ENCODE measurements at regions of chr2 and their contacts with region 1.

Region 1: GRCh38 chr2:163132850-163133249 is 294.3 kb upstream of the KCNH7 start:
- H3K4me3 Mint-ChIP-seq: no peak overlapping the region
- H3K27ac Mint-ChIP-seq: no peak overlapping the region
- H3K4me1 Mint-ChIP-seq: no peaks in the 10 kb centered on the region
- H3K27me3 Mint-ChIP-seq: no peaks in the 10 kb centered on the region

Region 2: DNA sequence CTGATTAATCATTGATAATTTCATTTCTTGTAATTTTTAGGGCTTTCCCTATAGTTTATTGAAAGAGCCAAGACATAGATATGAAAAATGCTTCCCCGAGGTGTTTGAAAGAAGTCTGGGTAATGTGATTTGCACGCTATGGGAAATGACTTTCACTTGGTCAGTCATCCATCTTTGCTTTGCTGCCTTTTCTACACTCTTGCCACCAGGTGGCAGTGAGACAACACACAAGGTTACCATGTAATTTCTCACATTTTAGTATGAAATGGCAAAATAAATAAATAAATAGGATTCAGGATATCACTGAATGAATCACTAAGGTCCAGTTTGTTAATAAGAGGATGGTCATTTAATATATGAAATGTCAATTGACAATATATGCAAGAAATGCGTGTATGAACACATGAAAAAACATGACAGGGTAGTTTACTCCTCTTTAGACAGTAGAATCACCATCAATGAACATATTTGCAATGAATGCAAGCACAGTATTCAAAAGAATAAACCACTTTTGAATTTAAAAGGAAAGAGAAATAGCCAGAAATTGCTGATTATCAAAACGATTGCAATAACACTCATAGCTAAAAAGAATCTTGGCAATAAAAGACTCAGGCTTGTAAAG is 242.0 kb before region 1 on chr2:
- intact Hi-C with region 1: loop called (anchors 5 kb)
- H3K4me3 Mint-ChIP-seq: no peak overlapping the region
- H3K27ac Mint-ChIP-seq: no peak overlapping the region
- H3K4me1 Mint-ChIP-seq: no peaks in the 10 kb centered on the region
- H3K27me3 Mint-ChIP-seq: no peaks in the 10 kb centered on the region